Gastrocnemius medialis (tissue), 4 donors: ENCODE measurements at regions of chr4 and their contacts with region 1.

Region 1: GRCh38 chr4:99324979-99325378 is 3.8 kb upstream of the ADH1B start:
- DNase-seq: peak; percentile 81 to 82
- ATAC-seq: peak; percentile 83 to 87
- H3K4me3 ChIP-seq: no peak overlapping the region
- H3K27ac ChIP-seq: peak overlapping the region; percentile 88 to 93 (median 92)
- H3K4me1 ChIP-seq: peaks cover 34% of the 10 kb centered on the region in 2 donors
- H3K27me3 ChIP-seq: no peaks in the 10 kb centered on the region
- CTCF ChIP-seq: no peak
- POLR2A ChIP-seq: no peak

Region 2: DNA sequence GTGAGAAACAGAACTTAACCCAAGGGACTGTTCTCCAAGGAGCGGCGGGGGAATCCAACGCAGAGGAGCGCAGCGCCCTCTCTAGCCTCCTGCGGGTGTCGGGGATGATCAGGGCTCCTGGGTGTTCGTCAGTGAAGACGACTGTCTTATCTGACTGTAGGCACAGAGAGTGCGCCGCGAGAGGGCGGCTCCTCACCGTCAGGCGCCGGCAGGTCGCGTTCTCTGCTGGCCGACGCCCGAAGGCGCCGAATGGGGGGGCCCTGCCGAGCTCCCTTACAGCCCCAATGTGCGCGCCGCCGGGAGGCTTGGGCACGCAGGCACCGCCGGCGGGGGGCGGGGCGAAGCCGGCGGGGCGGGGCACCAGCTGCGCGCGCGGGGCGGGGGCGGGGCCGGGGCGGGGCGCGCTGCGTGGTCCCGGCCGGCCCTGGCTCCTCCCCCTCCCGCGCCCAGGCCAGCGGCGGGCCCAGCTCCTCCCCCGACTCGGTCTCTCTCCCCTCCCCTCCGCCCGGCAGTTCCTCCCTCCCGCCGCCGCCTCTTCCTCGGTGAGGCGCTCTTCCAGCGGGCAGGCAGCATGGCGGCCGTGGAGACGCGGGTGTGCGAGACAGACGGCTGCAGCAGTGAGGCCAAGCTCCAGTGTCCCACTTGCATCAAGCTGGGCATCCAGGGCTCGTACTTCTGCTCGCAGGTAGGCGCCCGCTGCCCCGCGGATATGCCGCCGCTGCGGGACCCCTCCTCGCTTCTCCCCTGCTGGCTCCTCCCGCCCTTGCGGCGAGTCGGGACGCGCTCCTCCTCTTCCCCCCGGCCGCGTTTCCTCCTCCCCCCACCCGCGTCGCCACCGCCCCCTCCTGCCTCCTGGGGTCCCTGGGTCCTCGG is 329.6 kb before region 1 on chr4 and contains the start of gene METAP1:
- in situ Hi-C with region 1: no loop called
- intact Hi-C with region 1: loop called (anchors 5 kb)
- DNase-seq: peak; percentile 93 to 96
- ATAC-seq: peak; percentile 88 to 90
- H3K4me3 ChIP-seq: peak within 1 kb of the TSS; percentile 76 to 100 (median 93)
- H3K27ac ChIP-seq: peak within 1 kb of the TSS; percentile 87 to 97 (median 96)
- H3K4me1 ChIP-seq: peaks cover 13 to 16% of the 10 kb centered on the region in 2 donors
- H3K27me3 ChIP-seq: no peaks in the 10 kb centered on the region
- CTCF ChIP-seq: peak; percentile 55 to 69 (median 56)
- POLR2A ChIP-seq: peak; percentile 70 to 75
- total RNA-seq, gene METAP1: 33.3 to 45.0 (median 37.9) TPM

Region 3: GRCh38 chr4:99205153-99205979 is 119.6 kb before region 1 on chr4:
- in situ Hi-C with region 1: no loop called
- intact Hi-C with region 1: loop called (anchors 5 kb)
- DNase-seq: peak; percentile 10 to 49
- ATAC-seq: peak; percentile 77 to 84
- H3K4me3 ChIP-seq: no peak overlapping the region
- H3K27ac ChIP-seq: no peak overlapping the region
- H3K4me1 ChIP-seq: no peaks in the 10 kb centered on the region
- H3K27me3 ChIP-seq: no peaks in the 10 kb centered on the region
- CTCF ChIP-seq: no peak
- POLR2A ChIP-seq: no peak

Region 4: DNA sequence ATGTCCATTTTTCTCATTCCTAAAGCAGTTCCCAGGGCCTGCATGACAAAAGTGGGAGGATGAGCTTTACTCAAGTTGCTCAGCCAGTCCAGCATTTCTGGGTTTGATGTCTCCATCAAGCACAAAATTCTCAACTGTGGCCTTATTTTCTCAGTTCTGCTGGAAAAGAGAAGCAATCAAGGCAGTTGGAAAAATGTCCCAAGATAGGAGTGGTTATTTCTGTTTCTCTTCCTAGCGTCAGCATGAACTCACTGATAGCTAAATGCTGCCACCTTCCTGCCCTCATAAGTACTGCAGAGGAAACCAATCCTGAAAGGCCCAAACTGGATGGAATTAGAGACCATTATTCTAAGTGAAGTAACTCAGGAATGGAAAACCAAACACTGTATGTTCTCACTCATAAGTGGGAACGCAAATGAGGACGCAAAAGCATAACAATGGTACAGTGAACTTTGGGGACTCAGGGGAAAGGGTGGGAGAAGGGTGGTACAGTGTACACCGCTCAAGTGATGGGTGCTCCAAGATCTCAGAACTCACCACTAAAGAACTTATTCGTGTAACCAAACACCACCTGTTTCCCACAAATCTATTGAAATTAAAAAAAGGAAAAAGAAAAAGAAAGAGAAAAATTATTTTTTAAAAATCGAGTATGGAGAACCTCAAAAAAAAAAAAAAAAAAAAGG is 80.6 kb after region 1 on chr4:
- in situ Hi-C with region 1: no loop called
- intact Hi-C with region 1: loop called (anchors 1 kb)
- DNase-seq: peak; percentile 37 to 55
- ATAC-seq: peak; percentile 74 to 84
- H3K4me3 ChIP-seq: no peak overlapping the region
- H3K27ac ChIP-seq: peak overlapping the region; percentile 56 to 71 (median 63)
- H3K4me1 ChIP-seq: peaks cover 0 to 23% of the 10 kb centered on the region in 2 donors
- H3K27me3 ChIP-seq: no peaks in the 10 kb centered on the region
- CTCF ChIP-seq: peak; percentile 94 to 96 (median 95)
- POLR2A ChIP-seq: no peak

Region 5: GRCh38 chr4:99723612-99724011 is 398.6 kb after region 1 on chr4:
- in situ Hi-C with region 1: no loop called
- intact Hi-C with region 1: loop called (anchors 2 kb)
- DNase-seq: peak; percentile 83 to 94
- ATAC-seq: peak; percentile 97 to 98
- H3K4me3 ChIP-seq: no peak overlapping the region
- H3K27ac ChIP-seq: peak overlapping the region; percentile 89 to 95 (median 91)
- H3K4me1 ChIP-seq: peaks cover 38 to 48% of the 10 kb centered on the region in 2 donors
- H3K27me3 ChIP-seq: no peaks in the 10 kb centered on the region
- CTCF ChIP-seq: no peak
- POLR2A ChIP-seq: no peak